ENCODE measurements at regions of chr1 and their contacts with region 1.

Region 1: DNA sequence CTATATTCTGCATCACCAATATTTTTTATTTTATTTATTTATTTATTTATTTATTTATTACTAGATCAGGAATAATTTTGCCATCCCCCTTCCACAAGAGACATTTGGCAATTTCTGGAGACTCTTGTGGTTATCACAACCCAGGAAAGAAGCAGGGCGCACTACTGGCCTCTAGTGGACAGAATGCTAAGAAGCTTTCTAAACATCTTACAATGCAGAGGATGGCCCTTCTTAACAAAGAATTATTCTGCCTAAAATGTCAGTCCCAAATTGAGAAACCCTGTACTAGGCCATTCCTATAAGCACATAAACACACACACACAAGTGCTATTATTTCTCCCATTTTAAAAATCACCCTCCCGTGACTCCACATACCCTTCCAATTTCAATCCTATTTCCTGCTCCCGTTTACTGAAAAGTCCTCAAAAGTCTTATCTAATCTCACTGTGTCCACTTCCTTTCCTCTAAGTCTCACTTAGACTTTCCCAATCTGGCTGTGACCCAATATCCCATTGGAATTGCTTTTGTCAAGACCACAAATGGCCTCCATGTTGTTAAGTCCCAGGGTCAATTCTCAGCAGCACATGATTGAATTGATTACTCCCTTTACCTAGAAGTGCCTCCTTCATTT is 43.7 kb upstream of the RNF11 start:
- DNase-seq: peak; percentile 73
- ATAC-seq: peak; percentile 49
- H3K4me3 Mint-ChIP-seq: no peak overlapping the region
- H3K27ac Mint-ChIP-seq: no peak overlapping the region
- H3K4me1 Mint-ChIP-seq: no peaks in the 10 kb centered on the region
- H3K27me3 Mint-ChIP-seq: peaks cover 4% of the 10 kb centered on the region

Region 2: DNA sequence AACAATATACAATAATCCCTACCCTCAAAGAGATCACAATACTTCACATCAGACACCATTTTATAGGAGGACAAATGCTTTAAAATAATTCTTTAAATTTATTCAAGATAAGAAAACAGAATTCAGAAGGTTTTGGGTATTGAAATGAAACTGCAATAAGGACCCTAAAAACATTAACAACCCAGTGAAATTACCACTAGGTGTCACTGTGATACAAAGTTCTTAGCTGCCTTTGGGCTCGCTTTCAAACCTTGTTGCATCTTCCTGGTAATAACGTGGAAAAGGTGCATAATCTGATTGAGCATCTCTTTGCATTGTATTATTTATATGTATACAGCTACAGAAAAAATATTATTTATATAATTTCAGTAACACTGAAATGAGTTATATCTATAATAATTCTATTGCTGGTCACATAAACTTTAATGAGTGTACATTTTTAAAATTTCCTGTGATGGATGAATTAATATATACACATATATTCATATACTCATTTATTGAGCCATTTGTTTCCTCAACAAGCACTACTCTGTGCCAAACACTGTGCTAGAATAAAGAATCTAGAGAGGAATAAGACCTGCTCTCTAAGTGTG is 417.5 kb before region 1 on chr1:
- CTCF ChIA-PET with region 1: interaction called, 94 read pairs
- POLR2A ChIA-PET with region 1: no interaction called
- DNase-seq: no peak
- ATAC-seq: peak; percentile 58
- H3K4me3 Mint-ChIP-seq: no peak overlapping the region
- H3K27ac Mint-ChIP-seq: no peak overlapping the region
- H3K4me1 Mint-ChIP-seq: no peaks in the 10 kb centered on the region
- H3K27me3 Mint-ChIP-seq: no peaks in the 10 kb centered on the region

Region 3: DNA sequence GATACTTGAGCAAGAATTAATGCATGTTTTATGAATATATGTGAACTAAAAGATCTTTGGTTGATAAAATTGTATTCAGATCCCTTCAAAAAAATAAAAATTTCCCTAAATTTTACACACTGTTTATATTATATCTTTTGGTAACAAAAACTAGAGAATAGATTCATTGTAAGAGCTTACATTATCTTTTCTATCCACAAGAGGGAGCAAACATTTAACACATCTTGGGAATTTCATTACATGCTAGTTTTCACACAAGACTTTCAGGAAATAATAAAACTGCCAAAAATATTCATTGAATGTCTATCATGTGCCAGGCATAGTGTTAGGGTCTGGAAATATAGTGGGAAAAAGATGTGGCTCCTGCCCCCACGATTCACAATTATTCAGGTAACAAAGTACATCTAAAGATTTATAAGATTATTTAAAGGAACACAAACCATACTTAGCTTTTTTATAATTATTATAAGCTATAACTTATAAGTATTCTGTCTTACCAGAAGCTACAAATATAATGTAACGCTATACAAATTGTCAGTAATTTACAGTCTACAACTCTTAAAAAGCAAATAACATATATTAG is 262.9 kb before region 1 on chr1:
- CTCF ChIA-PET with region 1: interaction called, 42 read pairs
- POLR2A ChIA-PET with region 1: no interaction called
- DNase-seq: no peak
- ATAC-seq: no peak
- H3K4me3 Mint-ChIP-seq: no peak overlapping the region
- H3K27ac Mint-ChIP-seq: no peak overlapping the region
- H3K4me1 Mint-ChIP-seq: peaks cover 10% of the 10 kb centered on the region
- H3K27me3 Mint-ChIP-seq: no peaks in the 10 kb centered on the region

Region 4: GRCh38 chr1:51175278-51175677 is 17.1 kb before region 1 on chr1:
- CTCF ChIA-PET with region 1: interaction called, 15 read pairs
- POLR2A ChIA-PET with region 1: no interaction called
- DNase-seq: no peak
- ATAC-seq: no peak
- H3K4me3 Mint-ChIP-seq: no peak overlapping the region
- H3K27ac Mint-ChIP-seq: no peak overlapping the region
- H3K4me1 Mint-ChIP-seq: peaks cover 2% of the 10 kb centered on the region
- H3K27me3 Mint-ChIP-seq: peaks cover 26% of the 10 kb centered on the region

Region 5: GRCh38 chr1:51296383-51297357 is 104.3 kb after region 1 on chr1:
- CTCF ChIA-PET with region 1: interaction called, 47 read pairs
- POLR2A ChIA-PET with region 1: no interaction called
- DNase-seq: peak; percentile 78
- ATAC-seq: peak; percentile 79
- H3K4me3 Mint-ChIP-seq: peak overlapping the region; percentile 57
- H3K27ac Mint-ChIP-seq: peak overlapping the region; percentile 79
- H3K4me1 Mint-ChIP-seq: peaks cover 44% of the 10 kb centered on the region
- H3K27me3 Mint-ChIP-seq: no peaks in the 10 kb centered on the region

Measured in activated CD8-positive, alpha-beta T cell treated with anti-CD3 and anti-CD28 coated beads, Interleukin-2, amount 10 ng/mL, durations not matched to agents 7 days and 5 days (primary cell).